Activated naive CD4-positive, alpha-beta T cell treated with anti-CD3 and anti-CD28 coated beads for 36 hours (primary cell): ENCODE measurements at regions of chr11 and their contacts with region 1.

Region 1: DNA sequence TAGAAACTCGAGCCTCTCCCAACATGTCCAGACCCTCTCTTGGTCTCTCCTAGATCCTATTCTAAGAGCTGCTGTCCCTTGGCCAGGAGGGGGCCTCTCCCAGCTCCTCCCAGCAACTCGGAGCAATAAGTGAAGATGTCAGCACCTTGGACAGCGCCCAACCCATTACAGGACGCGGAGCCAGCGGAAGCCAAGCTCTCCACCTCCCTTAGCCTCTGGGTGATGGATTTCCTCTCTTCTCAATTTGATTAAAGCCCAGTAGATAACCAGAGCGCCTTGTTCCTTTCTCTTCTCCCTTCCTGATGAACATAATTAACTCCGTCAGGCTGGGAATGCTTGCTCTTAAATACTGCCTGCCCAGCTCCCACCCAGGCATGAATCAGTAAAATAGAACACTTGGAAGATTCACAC is 26.2 kb upstream of the TPBGL start:
- DNase-seq: peak; percentile 92
- H3K4me3 Mint-ChIP-seq: no peak overlapping the region
- H3K27ac Mint-ChIP-seq: no peak overlapping the region
- H3K4me1 Mint-ChIP-seq: no peaks in the 10 kb centered on the region
- H3K27me3 Mint-ChIP-seq: peaks cover 12% of the 10 kb centered on the region

Region 2: GRCh38 chr11:75233742-75234172 is 19.3 kb after region 1 on chr11:
- CTCF ChIA-PET with region 1: no interaction called
- intact Hi-C with region 1: loop called (anchors 1 kb)
- DNase-seq: peak; percentile 52
- H3K4me3 Mint-ChIP-seq: no peak overlapping the region
- H3K27ac Mint-ChIP-seq: no peak overlapping the region
- H3K4me1 Mint-ChIP-seq: no peaks in the 10 kb centered on the region
- H3K27me3 Mint-ChIP-seq: peaks cover 1% of the 10 kb centered on the region

Region 3: DNA sequence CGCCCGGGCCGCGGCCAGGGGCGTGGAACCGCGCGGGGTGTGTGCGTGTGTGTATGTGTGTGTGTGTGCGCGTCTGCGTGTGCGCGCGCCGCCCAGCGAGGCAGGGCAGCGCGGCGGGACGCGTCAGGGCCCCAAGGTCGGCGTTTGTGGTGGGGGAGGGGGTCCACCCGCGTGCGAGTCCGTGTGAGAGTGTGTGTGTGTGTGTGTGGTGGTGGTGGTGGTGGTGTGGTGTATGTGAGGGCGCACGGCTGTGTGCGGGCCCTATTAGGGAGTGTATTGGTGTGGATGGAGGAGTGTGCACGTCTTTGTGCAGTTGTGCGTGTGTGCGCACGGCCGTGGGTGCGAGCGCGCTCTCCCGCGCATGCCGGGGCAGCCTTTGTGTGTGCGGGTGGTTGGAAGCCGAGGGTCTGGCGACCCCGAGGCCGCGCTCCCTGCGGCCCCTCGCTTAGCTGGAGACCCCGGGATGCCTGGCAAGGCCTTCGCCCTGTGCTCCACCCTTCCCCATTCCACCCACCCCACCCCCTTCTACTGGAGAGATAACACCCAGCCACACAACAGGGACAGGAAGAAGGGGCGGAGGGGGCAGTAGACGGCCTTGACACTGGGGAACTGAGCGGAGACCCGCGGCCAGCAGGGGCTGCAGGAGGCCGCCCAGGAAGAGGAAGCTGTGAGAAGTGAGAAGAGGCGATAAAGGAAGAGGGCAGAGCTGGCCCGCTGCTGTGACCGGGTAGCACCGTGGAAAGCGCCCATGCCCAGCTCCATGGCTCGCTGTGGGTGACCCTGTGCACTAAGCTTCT is 137.6 kb after region 1 on chr11:
- CTCF ChIA-PET with region 1: no interaction called
- intact Hi-C with region 1: no loop called
- DNase-seq: peak; percentile 54
- H3K4me3 Mint-ChIP-seq: peak overlapping the region; percentile 84
- H3K27ac Mint-ChIP-seq: peak overlapping the region; percentile 75
- H3K4me1 Mint-ChIP-seq: peaks cover 55% of the 10 kb centered on the region
- H3K27me3 Mint-ChIP-seq: no peaks in the 10 kb centered on the region